OCI-LY7 (cell line): ENCODE measurements at regions of chr15 and their contacts with region 1.

Region 1: GRCh38 chr15:98160236-98160635 is 199.7 kb downstream of the ARRDC4 start:
- DNase-seq: peak; percentile 74
- H3K4me3 ChIP-seq: no peak overlapping the region
- H3K27ac ChIP-seq: peak overlapping the region; percentile 18
- H3K4me1 ChIP-seq: peaks cover 39% of the 10 kb centered on the region
- CTCF ChIP-seq: no peak

Region 2: DNA sequence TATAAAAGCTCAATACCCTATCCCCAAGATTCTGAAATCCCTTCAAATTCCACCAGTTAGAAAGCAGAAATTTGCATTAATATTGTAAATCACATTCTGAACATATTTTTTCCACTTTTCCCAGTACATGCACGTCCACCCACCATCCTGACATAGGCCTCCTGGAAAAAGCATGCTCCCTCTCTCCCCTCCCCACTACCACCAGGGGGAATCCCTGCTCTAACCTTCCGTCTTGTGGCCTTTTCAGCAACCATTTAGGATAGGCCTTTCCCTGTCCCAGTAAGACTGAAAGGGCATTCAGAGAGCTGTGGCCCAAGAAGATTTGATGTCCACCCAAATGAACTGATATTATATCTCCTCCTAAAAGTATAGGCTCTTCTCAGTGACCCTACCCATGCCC is 17.7 kb before region 1 on chr15:
- CTCF ChIA-PET with region 1: no interaction called
- POLR2A ChIA-PET with region 1: interaction called, 5 read pairs
- intact Hi-C with region 1: loop called (anchors 2 kb)
- DNase-seq: no peak
- H3K4me3 ChIP-seq: no peak overlapping the region
- H3K27ac ChIP-seq: no peak overlapping the region
- H3K4me1 ChIP-seq: peaks cover 13% of the 10 kb centered on the region
- CTCF ChIP-seq: peak; percentile 34; the same call in 1 of the 2 replicates

Region 3: DNA sequence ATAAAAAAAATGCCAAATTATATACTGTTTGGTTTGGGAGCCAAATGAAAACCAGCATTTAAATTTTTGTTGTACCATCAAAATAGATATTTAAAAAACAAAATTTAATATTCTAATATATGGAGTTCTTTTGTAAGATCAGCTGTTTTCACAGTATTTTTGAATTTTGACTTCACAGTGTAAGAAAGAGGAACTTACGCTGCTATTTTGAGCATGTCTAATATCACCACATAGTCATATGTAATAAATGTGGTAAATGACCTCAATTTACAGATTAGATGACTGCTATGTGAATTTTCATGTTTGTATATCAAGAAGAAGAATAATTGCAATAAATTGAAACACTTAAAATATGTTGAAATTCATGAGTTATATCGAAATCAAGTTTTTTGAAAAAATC is 10.2 kb before region 1 on chr15:
- CTCF ChIA-PET with region 1: no interaction called
- POLR2A ChIA-PET with region 1: interaction called, 12 read pairs
- intact Hi-C with region 1: loop called (anchors 2 kb)
- DNase-seq: peak; percentile 28
- H3K4me3 ChIP-seq: no peak overlapping the region
- H3K27ac ChIP-seq: peak overlapping the region; percentile 40
- H3K4me1 ChIP-seq: peaks cover 47% of the 10 kb centered on the region
- CTCF ChIP-seq: no peak

Region 4: DNA sequence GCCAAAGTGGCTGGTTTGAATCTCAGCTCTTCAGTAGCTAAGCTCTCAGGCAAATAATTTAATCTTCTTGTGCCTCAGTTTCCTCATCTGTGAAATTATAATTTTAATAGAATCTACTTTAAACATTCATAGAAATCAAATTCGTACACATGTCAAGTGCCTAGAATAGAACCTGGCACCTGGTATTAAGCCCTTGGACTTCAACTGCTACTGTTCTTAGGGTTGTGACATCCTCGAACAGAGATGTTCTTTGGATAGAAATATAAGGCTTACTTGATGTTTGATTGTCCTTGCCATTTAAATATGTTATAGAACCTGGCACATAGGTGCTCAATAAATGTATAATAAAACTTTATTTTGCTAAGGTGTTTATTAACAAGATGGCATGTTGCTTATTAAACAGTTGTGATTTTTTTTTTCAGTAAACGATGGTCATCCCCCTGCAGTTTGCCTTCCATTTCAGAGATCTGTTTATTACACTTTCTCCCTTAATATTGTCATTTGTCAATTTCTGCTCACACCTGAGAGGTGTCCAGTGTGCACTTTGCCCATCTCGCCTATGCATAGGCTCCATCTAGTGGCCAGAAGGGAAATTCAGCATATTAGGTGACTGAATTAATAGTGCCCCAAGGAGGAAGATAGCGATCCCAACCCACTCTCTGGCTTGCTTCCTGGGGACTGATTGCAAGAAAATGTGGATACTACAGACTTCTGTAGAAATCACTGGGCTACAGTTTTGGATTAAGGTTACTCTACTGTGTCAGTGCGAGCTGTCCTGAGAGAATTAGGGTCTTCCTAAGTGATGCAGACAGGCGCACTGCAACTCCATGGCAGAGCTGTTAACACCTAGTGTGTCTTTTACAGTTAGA is 498.8 kb after region 1 on chr15:
- CTCF ChIA-PET with region 1: no interaction called
- POLR2A ChIA-PET with region 1: no interaction called
- intact Hi-C with region 1: loop called (anchors 10 kb)
- DNase-seq: peak; percentile 68
- H3K4me3 ChIP-seq: no peak overlapping the region
- H3K27ac ChIP-seq: no peak overlapping the region
- H3K4me1 ChIP-seq: peaks cover 2% of the 10 kb centered on the region
- CTCF ChIP-seq: peak; percentile 94